Mammary epithelial cell (primary cell): ENCODE measurements at regions of chr5 and their contacts with region 1.

Region 1: DNA sequence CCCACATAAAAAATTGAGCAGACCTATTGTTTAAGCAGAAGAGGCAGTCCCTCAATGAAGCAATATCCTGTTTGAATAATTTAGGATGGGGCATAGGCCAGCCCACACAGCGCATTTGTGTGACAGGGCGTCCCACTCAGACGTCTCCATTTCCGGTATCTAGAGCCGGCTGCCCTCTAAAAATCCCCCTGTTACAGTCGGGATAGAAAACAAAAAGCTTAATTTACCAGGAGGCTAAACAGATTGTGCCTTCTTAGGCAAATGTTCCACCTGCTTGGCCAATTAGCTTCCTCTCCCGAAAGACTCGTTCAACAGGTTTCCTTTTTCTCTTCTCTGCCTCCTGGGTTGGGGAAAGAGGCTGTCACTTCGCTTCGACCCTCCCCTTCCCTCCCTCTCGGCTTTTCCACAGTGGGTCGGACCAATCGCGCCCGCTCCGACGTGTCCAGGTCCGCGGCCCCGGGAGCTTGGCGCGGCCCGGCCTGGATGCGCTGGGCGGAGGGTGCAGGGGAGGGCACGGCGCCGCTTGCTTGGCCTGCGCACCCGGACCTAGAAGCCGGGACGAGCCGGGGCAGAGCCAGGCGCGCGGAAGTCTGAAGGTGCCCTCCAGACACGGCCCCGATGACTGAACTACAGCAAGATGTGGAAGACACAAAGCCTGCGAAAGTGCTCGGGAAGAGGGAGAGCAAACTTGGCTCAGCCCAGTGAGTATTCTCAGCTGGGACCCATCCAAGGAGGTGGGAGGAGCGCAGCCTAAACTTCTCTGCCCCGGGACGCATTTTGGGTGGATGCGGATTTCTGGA is at the start of gene GRAMD2B:
- DNase-seq: peak; percentile 97
- H3K4me3 ChIP-seq: peak within 1 kb of the TSS; percentile 73 to 92 (median 82)
- H3K27ac ChIP-seq: peak within 1 kb of the TSS; percentile 93
- H3K4me1 ChIP-seq: peaks cover 17% of the 10 kb centered on the region
- H3K27me3 ChIP-seq: no peaks in the 10 kb centered on the region
- CTCF ChIP-seq: no peak
- total RNA-seq, gene GRAMD2B: 56.2 to 113 TPM

Region 2: GRCh38 chr5:126370796-126371718 is 52.1 kb before region 1 on chr5:
- CTCF ChIA-PET with region 1: no interaction called
- dilution Hi-C with region 1: no loop called
- in situ Hi-C with region 1: no loop called
- intact Hi-C with region 1: loop called (anchors 1 kb)
- DNase-seq: peak; percentile 72
- H3K4me3 ChIP-seq: no peak overlapping the region
- H3K27ac ChIP-seq: peak overlapping the region; percentile 46
- H3K4me1 ChIP-seq: peaks cover 51% of the 10 kb centered on the region
- H3K27me3 ChIP-seq: no peaks in the 10 kb centered on the region
- CTCF ChIP-seq: peak in 1 of 2 donors; percentile 16

Region 3: DNA sequence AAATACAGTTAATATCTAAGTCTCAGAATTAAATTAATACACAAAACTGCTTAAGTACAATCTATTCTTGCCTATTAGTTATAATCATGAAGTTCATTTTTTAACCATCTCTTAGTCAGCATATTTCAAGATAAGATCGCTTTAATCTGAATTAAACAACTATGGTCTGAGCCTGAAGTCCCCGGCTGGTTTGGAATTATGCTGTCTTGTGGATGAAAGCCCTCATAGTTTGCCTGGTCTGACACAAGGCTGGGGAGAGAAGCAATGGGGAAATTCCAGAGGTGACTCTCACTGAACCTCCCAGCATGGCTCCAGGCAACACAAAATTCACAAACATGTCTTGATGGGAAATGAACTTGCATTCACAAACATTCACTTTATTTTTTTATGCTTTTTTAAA is 28.0 kb before region 1 on chr5:
- CTCF ChIA-PET with region 1: no interaction called
- dilution Hi-C with region 1: no loop called
- in situ Hi-C with region 1: no loop called
- intact Hi-C with region 1: loop called (anchors 2 kb)
- DNase-seq: peak; percentile 90
- H3K4me3 ChIP-seq: peak overlapping the region in 1 of 3 experiments; percentile 11
- H3K27ac ChIP-seq: peak overlapping the region; percentile 92
- H3K4me1 ChIP-seq: peaks cover 20% of the 10 kb centered on the region
- H3K27me3 ChIP-seq: no peaks in the 10 kb centered on the region
- CTCF ChIP-seq: no peak

Region 4: DNA sequence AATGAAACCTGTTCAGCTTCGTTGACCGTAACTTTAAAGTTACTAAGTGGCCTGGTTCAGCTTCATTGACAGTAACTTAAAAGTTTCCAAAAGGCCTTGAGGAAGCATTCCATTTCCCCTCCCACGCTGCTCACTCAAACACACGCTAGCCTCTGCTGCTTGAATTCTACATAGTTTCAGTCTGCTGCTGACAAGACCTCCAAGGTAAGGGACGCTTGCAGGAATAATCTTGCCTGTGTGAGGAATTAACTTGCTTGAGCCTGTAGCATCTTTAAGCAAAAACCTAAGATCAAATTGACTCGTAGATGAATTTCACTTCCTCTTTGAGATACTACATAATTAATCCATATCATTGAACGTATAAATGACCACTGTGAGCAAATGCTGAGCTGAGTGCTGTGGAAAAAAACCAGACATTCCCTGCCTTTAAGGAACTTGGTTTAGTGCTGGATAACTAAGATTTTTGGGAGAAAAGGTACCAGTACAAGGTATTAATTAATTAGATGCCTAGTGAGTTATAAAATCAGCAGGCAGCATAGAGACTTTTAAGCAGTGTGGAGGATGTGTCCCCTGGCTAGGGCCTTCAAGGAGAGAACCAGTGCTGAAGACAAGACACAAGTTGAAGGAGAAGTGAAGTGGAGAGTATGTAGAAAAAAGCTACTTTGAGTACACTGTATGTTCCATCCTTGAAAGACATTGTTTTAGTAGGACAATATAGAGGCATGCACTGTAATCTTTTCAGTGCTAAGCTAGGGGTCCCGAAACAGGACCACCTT is 39.2 kb after region 1 on chr5:
- CTCF ChIA-PET with region 1: interaction called, 4 read pairs
- dilution Hi-C with region 1: no loop called
- in situ Hi-C with region 1: no loop called
- intact Hi-C with region 1: loop called (anchors 5 kb)
- DNase-seq: peak; percentile 51
- H3K4me3 ChIP-seq: no peak overlapping the region
- H3K27ac ChIP-seq: peak overlapping the region; percentile 72
- H3K4me1 ChIP-seq: peaks cover 23% of the 10 kb centered on the region
- H3K27me3 ChIP-seq: no peaks in the 10 kb centered on the region
- CTCF ChIP-seq: no peak

Region 5: DNA sequence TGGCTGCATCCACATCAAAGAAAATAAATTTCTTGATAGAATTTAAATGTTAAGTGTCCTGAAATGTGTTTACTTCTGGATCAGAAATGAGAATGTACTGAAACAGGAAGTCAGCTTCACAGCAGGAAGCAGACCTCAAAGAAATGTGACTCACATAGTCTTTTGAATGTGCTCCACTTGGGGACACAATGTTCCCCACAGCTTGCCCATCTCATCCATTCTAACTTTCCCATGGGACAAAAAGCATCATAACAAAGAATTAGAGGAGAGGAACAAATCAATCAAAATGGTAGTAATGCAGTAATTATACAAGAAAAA is 85.7 kb after region 1 on chr5:
- CTCF ChIA-PET with region 1: no interaction called
- dilution Hi-C with region 1: no loop called
- in situ Hi-C with region 1: no loop called
- intact Hi-C with region 1: no loop called
- DNase-seq: no peak
- H3K4me3 ChIP-seq: no peak overlapping the region
- H3K27ac ChIP-seq: no peak overlapping the region
- H3K4me1 ChIP-seq: peaks cover 13% of the 10 kb centered on the region
- H3K27me3 ChIP-seq: no peaks in the 10 kb centered on the region
- CTCF ChIP-seq: no peak

Region 6: GRCh38 chr5:126544087-126544740 is 121.0 kb after region 1 on chr5:
- CTCF ChIA-PET with region 1: no interaction called
- dilution Hi-C with region 1: no loop called
- in situ Hi-C with region 1: no loop called
- intact Hi-C with region 1: loop called (anchors 1 kb)
- DNase-seq: peak; percentile 25
- H3K4me3 ChIP-seq: no peak overlapping the region
- H3K27ac ChIP-seq: no peak overlapping the region
- H3K4me1 ChIP-seq: no peaks in the 10 kb centered on the region
- H3K27me3 ChIP-seq: no peaks in the 10 kb centered on the region
- CTCF ChIP-seq: peak; percentile 42 to 64